Heart right ventricle (tissue), 16 donors: ENCODE measurements at regions of chr2 and their contacts with region 1.

Region 1: DNA sequence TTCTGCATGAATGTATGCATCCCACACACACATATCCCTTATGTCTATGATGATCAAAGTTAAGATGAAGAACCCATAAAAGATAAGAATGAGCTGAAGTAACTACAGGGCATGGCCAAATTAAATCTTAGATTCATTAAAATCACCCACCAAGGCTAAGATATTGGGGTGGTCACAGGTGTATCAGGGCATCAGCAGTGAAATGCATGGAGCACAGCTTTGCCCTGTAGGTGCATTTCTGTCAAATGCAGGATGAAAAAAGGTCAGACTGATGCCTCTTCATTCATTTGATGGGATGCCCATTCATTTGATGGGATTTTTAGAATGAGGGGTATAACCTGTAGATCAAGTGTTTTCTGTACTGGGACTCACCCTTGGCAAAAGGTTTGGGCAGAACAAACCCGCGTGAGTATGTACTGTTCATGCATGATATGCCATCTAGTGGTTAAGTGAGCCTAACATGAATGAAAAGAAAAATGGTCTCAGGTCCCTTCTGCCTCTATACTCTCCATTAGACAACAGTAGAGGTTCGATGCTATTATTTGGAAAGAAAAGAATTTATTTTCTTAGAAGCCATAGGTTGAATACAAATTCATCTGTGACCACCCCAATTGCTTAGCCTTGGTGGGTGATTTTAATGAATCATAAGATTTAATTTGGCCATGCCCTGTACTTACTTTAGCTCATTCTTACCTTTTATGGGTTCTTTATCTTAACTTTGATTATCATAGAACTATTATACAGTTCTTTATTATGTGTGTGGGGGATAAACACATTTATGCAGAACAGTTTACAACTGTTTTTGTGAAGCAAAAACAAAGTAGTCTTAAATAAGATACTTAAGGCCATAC is 43.2 kb upstream of the NOSTRIN start:
- DNase-seq: peak in 1 of 2 donors; percentile 25
- ATAC-seq: peak; percentile 54 to 78 (median 72)
- H3K4me3 ChIP-seq: no peak overlapping the region
- H3K27ac ChIP-seq: no peak overlapping the region
- H3K4me1 ChIP-seq: peaks cover 0 to 30% (median 17%) of the 10 kb centered on the region in 9 donors
- H3K27me3 ChIP-seq: no peaks in the 10 kb centered on the region
- CTCF ChIP-seq: peak; percentile 39 to 77 (median 64)

Region 2: DNA sequence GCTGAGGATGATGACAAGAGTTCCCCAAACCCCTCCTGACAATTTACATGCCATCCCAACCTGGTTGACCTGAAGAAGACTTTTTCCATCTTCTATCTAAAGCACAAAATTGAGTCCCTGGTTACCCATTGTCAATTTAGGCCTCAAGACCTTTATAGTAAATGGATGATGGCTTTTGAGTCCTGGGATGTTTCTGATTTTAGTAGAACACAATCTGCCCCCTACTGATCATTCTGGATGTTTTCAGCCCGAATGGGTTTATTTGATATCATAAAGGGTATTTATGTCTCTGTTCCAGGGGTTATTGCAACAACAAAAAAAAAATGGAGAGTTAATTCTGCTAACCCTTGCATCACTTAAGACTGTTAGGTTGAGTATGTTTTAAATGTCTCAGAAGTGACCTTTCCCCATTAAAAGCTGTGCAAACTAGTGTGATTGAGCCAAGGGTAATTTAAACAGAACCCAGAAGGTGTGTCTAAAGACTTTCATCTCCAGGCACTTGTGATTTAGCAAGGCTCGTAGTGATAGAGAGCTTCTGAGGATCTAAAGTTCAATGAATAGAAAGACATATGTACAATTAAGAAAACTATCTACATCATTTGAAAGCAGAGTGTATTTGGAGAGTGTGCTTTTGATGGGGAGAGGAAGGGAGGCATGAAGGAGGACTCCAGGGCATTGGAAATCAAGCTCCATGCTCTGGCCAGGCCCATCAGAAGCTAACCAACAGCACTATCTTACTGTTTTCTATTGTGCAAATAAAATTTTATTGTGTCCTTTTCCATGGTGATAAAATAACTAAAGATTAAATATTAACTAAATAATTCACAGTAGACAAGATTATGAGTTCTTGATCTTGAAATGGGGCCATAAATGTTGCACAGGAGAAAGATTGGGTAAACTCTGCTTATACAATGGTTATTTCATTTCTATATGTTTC is 53.4 kb before region 1 on chr2:
- intact Hi-C with region 1: loop called in 1 of 10 experiments (anchors 10 kb)
- DNase-seq: no peak
- ATAC-seq: no peak
- H3K4me3 ChIP-seq: no peak overlapping the region
- H3K27ac ChIP-seq: no peak overlapping the region
- H3K4me1 ChIP-seq: peaks cover 0 to 8% (median 4%) of the 10 kb centered on the region in 9 donors
- H3K27me3 ChIP-seq: no peaks in the 10 kb centered on the region
- CTCF ChIP-seq: peak in 5 of 9 donors; percentile 29 to 47 (median 38)

Region 3: DNA sequence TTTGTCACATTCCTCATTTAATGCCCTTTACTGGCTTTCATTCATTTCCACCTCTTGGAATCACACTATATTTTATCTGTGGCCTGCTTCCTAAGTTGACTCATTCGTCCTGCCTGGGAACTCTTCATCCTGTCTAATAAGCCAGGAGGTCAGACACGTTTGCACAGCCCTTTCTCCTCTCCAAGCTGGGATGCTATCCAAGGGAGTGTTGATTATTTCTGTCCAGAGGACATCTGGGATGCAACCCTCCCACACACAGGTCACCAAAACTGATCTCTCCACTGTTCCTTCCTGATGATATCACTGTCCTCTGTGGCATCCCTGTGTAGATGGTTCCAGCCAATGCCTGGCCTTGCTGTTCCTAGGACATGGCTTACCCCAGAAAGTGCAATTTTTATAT is 36.6 kb before region 1 on chr2:
- intact Hi-C with region 1: loop called in 1 of 10 experiments (anchors 5 kb)
- DNase-seq: peak in 1 of 2 donors; percentile 78
- ATAC-seq: peak; percentile 81 to 99 (median 96)
- H3K4me3 ChIP-seq: no peak overlapping the region
- H3K27ac ChIP-seq: peak overlapping the region in 9 of 10 donors; percentile 31 to 73 (median 62)
- H3K4me1 ChIP-seq: peaks cover 0 to 20% (median 15%) of the 10 kb centered on the region in 9 donors
- H3K27me3 ChIP-seq: no peaks in the 10 kb centered on the region
- CTCF ChIP-seq: no peak